Aorta (tissue), 5 donors: ENCODE measurements at regions of chr12 and their contacts with region 1.

Region 1: GRCh38 chr12:93397412-93397811 is 19.7 kb downstream of the NUDT4 start:
- DNase-seq: no peak
- ATAC-seq: no peak
- H3K4me3 ChIP-seq: no peak overlapping the region
- H3K27ac ChIP-seq: no peak overlapping the region
- H3K4me1 ChIP-seq: peaks cover 0 to 3% of the 10 kb centered on the region in 2 donors
- H3K27me3 ChIP-seq: no peaks in the 10 kb centered on the region

Region 2: GRCh38 chr12:92987362-92987761 is 410.1 kb before region 1 on chr12:
- intact Hi-C with region 1: loop called (anchors 2 to 5 kb)
- DNase-seq: no peak
- ATAC-seq: peak; percentile 89
- H3K4me3 ChIP-seq: no peak overlapping the region
- H3K27ac ChIP-seq: peak overlapping the region in 1 of 2 donors; percentile 7
- H3K4me1 ChIP-seq: no peaks in the 10 kb centered on the region
- H3K27me3 ChIP-seq: no peaks in the 10 kb centered on the region

Region 3: DNA sequence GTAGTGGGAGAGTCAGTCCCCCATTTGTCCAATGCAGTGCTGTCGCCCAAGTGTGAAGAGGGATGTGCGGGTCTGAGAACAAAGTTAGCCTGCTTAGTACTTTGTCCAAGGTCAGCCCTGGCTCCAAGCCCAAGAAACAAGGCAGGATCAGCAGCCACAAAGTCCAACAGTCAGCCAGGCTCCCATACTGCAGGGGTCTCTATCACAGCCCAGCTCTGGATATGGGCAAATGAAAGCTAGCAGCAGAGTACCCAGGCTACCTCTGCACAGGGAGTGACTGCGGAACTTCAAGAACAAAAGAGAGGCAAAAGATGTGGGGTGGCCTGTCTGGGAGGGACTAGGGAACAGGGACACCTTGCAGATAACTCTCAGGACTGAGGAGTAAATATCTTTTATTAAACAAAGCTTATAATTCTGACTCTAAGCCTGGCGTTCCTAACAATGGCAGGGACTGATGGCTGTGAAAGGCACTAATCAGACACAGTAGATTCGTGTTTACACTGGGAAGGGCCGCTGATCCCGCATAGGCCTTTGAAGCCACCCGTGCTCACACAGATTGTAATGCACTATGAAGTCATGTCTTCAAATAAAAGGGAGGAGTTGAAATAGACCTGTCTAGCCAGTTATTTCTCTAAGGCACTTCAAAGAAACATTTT is 377.3 kb before region 1 on chr12:
- intact Hi-C with region 1: loop called in 1 of 2 experiments (anchors 5 kb)
- DNase-seq: no peak
- ATAC-seq: peak; percentile 52
- H3K4me3 ChIP-seq: no peak overlapping the region
- H3K27ac ChIP-seq: no peak overlapping the region
- H3K4me1 ChIP-seq: no peaks in the 10 kb centered on the region
- H3K27me3 ChIP-seq: no peaks in the 10 kb centered on the region